Activated CD8-positive, alpha-beta memory T cell treated with anti-CD3 and anti-CD28 coated beads, Interleukin-2, amount 10 ng/mL, durations not matched to agents 7 days and 5 days (primary cell): ENCODE measurements at regions of chr20 and their contacts with region 1.

Region 1: DNA sequence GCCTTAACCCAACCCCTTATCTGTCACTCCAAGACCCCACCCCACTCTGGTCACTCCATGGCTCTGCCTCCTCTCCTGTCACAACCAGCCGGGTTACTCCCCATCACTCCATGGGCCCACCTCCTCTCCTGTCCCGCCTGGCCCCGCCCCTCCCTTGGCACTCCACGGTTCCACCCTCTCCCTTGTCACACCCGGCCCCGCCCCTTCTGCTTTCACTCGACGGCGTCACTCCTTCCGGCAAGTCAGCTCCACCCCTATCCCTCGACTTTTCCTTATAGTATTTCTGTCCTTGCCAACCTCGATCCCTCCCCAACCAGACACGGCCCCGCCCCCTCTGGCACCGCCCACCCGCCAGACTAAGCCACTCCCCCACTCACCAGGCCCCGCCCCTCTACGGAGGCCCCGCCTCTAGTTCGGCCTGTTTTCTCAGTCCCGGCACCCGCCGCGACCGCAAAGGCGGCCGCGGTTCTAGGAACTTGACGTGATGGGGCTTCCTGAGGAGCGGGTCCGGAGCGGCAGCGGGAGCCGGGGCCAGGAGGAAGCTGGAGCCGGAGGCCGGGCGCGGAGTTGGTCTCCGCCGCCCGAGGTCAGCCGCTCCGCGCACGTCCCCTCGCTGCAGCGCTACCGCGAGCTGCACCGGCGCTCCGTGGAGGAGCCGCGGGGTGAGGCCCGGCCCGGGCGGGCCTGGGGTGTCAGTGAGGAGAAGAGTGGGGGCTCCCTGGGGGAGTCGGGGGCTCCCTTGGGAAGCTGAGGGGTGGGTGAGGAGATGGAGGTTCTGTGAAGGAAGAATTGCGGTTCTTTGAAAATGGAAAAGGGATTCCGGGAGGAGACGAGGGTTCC is at the start of gene ACSS2:
- DNase-seq: peak; percentile 99
- ATAC-seq: peak; percentile 84
- H3K4me3 Mint-ChIP-seq: peak within 1 kb of the TSS; percentile 87
- H3K27ac Mint-ChIP-seq: peak within 1 kb of the TSS; percentile 80
- H3K4me1 Mint-ChIP-seq: peaks cover 56% of the 10 kb centered on the region
- H3K27me3 Mint-ChIP-seq: peaks cover 9% of the 10 kb centered on the region
- total RNA-seq, gene ACSS2: 8.9 to 22.5 TPM

Region 2: GRCh38 chr20:34437330-34437986 is 438.9 kb before region 1 on chr20:
- CTCF ChIA-PET with region 1: no interaction called
- DNase-seq: no peak
- ATAC-seq: no peak
- H3K4me3 Mint-ChIP-seq: no peak overlapping the region
- H3K27ac Mint-ChIP-seq: peak overlapping the region; percentile 11
- H3K4me1 Mint-ChIP-seq: peaks cover 11% of the 10 kb centered on the region
- H3K27me3 Mint-ChIP-seq: no peaks in the 10 kb centered on the region

Region 3: GRCh38 chr20:34709044-34709830 is 167.1 kb before region 1 on chr20:
- CTCF ChIA-PET with region 1: no interaction called
- DNase-seq: peak; percentile 85
- ATAC-seq: peak; percentile 70
- H3K4me3 Mint-ChIP-seq: peak overlapping the region; percentile 75
- H3K27ac Mint-ChIP-seq: peak overlapping the region; percentile 78
- H3K4me1 Mint-ChIP-seq: peaks cover 27% of the 10 kb centered on the region
- H3K27me3 Mint-ChIP-seq: peaks cover 7% of the 10 kb centered on the region

Region 4: DNA sequence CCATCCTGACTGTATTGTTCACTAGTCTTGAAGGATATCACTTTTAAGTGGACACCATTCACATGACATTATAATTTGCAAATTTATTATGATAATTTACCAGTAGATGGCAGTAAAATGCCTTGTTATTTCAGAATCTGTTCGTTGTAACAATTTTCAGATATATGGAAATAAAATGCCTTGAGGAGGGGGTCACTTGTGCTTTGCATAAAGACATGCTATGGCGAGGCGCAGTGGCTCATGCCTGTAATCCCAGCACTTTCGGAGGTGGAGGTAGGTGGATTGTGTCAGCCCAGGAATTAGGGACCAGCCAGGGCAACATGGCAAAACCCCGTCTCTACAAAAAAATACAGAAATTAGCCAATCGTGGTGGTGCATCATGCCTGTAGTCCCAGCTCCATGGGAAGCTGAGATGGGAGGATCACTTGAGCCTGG is 41.9 kb before region 1 on chr20:
- CTCF ChIA-PET with region 1: interaction called, 10 read pairs
- DNase-seq: no peak
- ATAC-seq: no peak
- H3K4me3 Mint-ChIP-seq: no peak overlapping the region
- H3K27ac Mint-ChIP-seq: no peak overlapping the region
- H3K4me1 Mint-ChIP-seq: peaks cover 2% of the 10 kb centered on the region
- H3K27me3 Mint-ChIP-seq: peaks cover 59% of the 10 kb centered on the region

Region 5: DNA sequence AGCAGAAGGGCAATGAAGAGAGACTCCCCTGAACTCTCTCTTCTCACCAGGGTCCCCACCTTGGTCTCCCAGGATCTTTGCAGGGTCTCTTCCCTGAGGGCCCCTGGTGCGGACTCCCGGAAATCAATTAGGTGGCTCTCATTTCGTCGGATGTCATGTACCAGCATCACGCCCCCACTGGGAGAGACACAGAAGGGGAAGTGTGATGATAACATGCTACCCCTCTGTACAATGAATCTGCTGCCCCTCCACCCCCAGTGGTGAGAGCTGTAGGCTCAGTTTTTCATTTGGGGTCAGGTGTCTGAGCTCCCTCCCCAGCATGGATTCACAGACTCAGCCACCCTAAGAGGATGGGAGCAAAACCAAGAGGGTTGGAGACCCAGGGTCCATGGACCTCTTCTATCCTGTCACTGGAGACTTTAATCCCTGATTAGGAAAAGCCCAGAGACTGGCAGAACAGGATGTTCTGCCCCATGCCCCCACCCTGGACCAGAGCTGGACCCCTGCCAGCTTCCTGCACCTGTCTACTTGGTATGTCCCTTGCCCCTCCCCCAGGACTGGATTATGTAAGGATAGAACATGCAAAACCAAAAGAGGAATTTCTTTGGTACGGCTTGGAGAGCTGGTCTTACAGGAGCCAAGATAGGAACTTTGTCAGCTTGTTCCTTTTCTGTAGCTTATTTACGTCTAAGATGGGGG is 14.8 kb before region 1 on chr20:
- CTCF ChIA-PET with region 1: interaction called, 29 read pairs
- DNase-seq: no peak
- ATAC-seq: no peak
- H3K4me3 Mint-ChIP-seq: no peak overlapping the region
- H3K27ac Mint-ChIP-seq: no peak overlapping the region
- H3K4me1 Mint-ChIP-seq: no peaks in the 10 kb centered on the region
- H3K27me3 Mint-ChIP-seq: no peaks in the 10 kb centered on the region

Region 6: DNA sequence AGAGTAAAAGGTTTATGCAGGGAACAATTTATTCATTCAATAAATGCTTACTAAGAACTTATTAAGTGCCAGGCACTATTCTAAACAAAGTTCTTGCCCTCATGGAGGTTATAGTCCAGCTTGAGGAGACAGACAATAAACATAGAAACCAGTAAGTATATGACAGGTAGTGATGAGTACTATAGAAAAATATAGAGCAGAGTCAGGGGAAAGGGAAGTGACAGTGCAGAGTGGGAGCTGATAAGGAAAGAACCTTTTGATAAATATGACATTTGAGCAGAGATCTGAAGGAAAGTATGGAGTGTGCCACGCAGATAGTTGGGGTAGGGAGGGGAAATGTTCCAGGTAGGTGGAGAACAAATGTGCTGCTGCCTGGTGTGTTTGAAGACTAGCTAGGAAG is 12.1 kb after region 1 on chr20:
- CTCF ChIA-PET with region 1: interaction called, 22 read pairs
- DNase-seq: no peak
- ATAC-seq: no peak
- H3K4me3 Mint-ChIP-seq: no peak overlapping the region
- H3K27ac Mint-ChIP-seq: no peak overlapping the region
- H3K4me1 Mint-ChIP-seq: peaks cover 35% of the 10 kb centered on the region
- H3K27me3 Mint-ChIP-seq: no peaks in the 10 kb centered on the region

Region 7: DNA sequence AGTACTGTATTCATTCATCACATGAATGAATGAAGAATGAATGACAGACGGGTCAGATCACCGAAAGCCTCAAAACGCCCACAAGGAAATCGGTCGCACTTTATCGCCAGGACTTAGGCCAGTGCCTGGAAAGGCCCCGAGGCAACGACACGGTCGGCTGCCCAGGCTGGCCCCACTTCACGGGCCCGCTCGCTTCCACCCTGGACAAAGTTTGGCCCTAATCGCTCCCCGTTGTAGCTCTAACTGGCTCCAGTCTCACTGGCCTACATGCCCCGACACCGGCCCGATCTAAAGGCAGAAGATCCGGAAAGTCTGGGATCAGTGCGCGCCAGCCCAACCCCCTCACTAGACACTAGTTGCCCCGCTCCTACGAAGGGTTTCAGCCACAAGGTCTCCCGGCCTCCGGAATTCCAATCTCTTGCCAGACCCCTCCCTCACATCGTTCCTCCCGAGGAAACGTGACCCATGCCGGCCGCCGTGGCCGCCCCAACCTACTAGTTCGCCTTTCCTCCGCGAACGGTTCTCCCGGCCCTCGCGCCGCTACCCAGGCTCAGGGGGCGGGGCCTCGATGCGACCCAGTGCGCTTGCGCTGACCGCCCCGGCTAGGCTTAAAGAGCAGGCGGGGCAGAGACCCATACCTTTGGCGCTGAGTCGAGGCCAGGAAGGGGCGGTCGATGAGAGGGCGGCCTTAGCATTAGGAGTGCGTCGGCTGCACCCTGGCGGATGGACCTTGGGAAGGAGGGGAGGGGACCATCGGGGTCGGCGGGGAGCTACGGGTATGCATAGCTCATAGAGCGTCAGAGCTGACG is 79.1 kb after region 1 on chr20 and contains the starts of genes GSS and MYH7B:
- CTCF ChIA-PET with region 1: interaction called, 168 read pairs
- DNase-seq: peak; percentile 98
- ATAC-seq: peak; percentile 97
- H3K4me3 Mint-ChIP-seq: peak within 1 kb of the TSS; percentile 97
- H3K27ac Mint-ChIP-seq: peak within 1 kb of the TSS; percentile 93
- H3K4me1 Mint-ChIP-seq: peaks cover 24% of the 10 kb centered on the region
- H3K27me3 Mint-ChIP-seq: no peaks in the 10 kb centered on the region
- total RNA-seq, gene GSS: 59.4 to 64.6 TPM
- total RNA-seq, gene MYH7B: 0.16 to 0.26 TPM

Region 8: GRCh38 chr20:35092524-35093266 is 216.3 kb after region 1 on chr20 and contains the start of gene TRPC4AP:
- CTCF ChIA-PET with region 1: interaction called, 23 read pairs
- DNase-seq: peak; percentile 92
- ATAC-seq: peak; percentile 94
- H3K4me3 Mint-ChIP-seq: peak within 1 kb of the TSS; percentile 91
- H3K27ac Mint-ChIP-seq: peak within 1 kb of the TSS; percentile 92
- H3K4me1 Mint-ChIP-seq: peaks cover 53% of the 10 kb centered on the region
- H3K27me3 Mint-ChIP-seq: no peaks in the 10 kb centered on the region
- total RNA-seq, gene TRPC4AP: 56.9 to 70.9 TPM

Region 9: GRCh38 chr20:35146920-35147574 is 270.7 kb after region 1 on chr20 and contains the start of gene EDEM2:
- CTCF ChIA-PET with region 1: interaction called, 11 read pairs
- DNase-seq: peak; percentile 96
- ATAC-seq: peak; percentile 95
- H3K4me3 Mint-ChIP-seq: peak within 1 kb of the TSS; percentile 93
- H3K27ac Mint-ChIP-seq: peak within 1 kb of the TSS; percentile 90
- H3K4me1 Mint-ChIP-seq: peaks cover 31% of the 10 kb centered on the region
- H3K27me3 Mint-ChIP-seq: no peaks in the 10 kb centered on the region
- total RNA-seq, gene EDEM2: 23.9 to 25.6 TPM